ENCODE measurements at regions of chr5 and their contacts with region 1.

Region 1: DNA sequence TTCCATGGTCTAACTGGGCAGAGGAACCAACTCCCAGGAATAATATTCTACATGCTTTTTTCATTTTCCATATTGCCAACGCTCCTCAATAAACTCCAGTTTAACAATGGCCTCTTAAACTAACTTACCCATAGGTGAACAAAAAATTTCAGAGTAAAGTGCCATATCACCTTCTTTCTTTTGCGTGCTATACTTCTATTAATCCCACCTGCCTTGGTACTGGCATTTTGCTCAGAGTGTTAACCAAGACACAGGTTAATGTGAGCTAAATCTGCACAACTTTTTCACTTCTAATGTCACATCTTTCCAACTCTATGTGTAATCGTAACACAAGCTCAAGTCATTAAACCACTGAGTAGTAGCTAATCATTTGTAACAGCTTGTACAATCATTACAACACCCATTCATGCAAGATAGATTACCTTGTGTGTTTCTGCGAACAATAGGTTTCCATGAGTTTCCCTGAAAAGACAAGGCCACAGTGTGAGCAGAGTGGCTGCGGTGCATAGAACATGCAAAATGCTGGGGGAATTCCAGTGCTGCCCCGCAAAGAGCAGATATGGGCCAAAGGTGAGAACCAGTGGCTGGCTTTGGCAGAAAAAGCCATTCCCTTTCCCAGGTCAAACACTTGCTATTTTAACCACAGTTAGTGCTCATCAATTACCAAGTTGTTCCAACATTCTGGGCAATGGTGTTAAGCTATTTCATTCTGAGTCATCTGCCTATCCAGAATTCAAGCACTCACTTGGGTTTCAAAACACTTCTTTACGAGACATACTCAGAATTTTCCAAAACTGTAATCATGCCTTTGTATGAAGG is 42.8 kb downstream of the TIMD4 start:
- DNase-seq: peak; percentile 84
- ATAC-seq: peak; percentile 75
- H3K4me3 Mint-ChIP-seq: peak overlapping the region; percentile 58
- H3K27ac Mint-ChIP-seq: peak overlapping the region; percentile 97
- H3K4me1 Mint-ChIP-seq: peaks cover 52% of the 10 kb centered on the region
- H3K27me3 Mint-ChIP-seq: no peaks in the 10 kb centered on the region

Region 2: DNA sequence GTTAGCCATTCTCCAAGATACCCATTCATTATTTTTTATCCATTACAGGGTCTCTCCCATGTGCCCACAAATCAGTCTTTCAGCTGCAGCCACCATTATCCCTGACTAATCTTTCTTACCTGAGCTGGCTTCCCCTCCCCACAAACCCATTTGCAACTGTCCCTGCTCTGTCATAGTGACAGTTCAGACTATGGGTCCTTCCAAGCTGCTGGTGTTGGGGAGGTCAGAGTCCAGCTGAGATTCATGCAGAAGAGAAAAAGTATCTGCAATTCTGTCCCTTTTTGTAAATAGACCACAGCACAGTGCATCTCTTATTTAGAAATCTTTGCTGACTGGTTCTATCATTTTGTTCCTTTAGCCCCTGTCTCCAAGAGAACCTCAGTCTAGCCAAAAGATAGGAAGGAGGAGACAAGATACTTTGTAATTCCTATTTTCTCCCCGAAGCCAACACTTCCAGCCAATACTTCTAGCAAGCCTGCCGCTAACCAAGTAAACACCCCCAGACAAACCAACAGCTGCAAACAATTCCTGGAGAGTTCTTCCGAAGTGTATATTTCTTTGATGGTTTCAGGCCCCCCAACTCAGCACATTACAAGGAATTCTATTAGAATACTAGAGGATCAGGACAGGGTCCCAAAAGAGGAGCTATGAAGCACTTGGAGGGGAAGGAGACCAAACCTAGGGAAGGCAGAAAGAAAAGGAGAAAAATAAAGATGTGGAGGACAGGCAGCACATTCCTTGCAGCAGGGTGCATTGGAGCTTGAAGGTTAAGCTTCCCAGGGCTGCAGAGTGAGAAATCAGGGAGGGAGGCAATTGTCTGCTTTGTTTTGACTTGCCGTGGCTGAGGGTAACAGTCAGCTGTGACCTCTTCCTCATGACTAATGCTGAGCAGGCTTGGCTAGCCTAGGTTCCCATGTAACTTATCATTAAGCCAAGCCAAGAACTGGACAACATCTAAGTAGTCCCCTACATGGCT is 444.8 kb before region 1 on chr5:
- CTCF ChIA-PET with region 1: no interaction called
- POLR2A ChIA-PET with region 1: no interaction called
- intact Hi-C with region 1: loop called in 1 of 2 experiments (anchors 10 kb)
- DNase-seq: no peak
- ATAC-seq: no peak
- H3K4me3 Mint-ChIP-seq: no peak overlapping the region
- H3K27ac Mint-ChIP-seq: no peak overlapping the region
- H3K4me1 Mint-ChIP-seq: peaks cover 5% of the 10 kb centered on the region
- H3K27me3 Mint-ChIP-seq: peaks cover 2% of the 10 kb centered on the region

Region 3: GRCh38 chr5:156812959-156813358 is 107.3 kb before region 1 on chr5:
- CTCF ChIA-PET with region 1: no interaction called
- POLR2A ChIA-PET with region 1: no interaction called
- intact Hi-C with region 1: no loop called
- DNase-seq: no peak
- ATAC-seq: no peak
- H3K4me3 Mint-ChIP-seq: no peak overlapping the region
- H3K27ac Mint-ChIP-seq: no peak overlapping the region
- H3K4me1 Mint-ChIP-seq: no peaks in the 10 kb centered on the region
- H3K27me3 Mint-ChIP-seq: peaks cover 4% of the 10 kb centered on the region

Region 4: GRCh38 chr5:156824800-156825199 is 95.5 kb before region 1 on chr5:
- CTCF ChIA-PET with region 1: no interaction called
- POLR2A ChIA-PET with region 1: no interaction called
- intact Hi-C with region 1: no loop called
- DNase-seq: no peak
- ATAC-seq: no peak
- H3K4me3 Mint-ChIP-seq: no peak overlapping the region
- H3K27ac Mint-ChIP-seq: no peak overlapping the region
- H3K4me1 Mint-ChIP-seq: no peaks in the 10 kb centered on the region
- H3K27me3 Mint-ChIP-seq: peaks cover 5% of the 10 kb centered on the region

Region 5: DNA sequence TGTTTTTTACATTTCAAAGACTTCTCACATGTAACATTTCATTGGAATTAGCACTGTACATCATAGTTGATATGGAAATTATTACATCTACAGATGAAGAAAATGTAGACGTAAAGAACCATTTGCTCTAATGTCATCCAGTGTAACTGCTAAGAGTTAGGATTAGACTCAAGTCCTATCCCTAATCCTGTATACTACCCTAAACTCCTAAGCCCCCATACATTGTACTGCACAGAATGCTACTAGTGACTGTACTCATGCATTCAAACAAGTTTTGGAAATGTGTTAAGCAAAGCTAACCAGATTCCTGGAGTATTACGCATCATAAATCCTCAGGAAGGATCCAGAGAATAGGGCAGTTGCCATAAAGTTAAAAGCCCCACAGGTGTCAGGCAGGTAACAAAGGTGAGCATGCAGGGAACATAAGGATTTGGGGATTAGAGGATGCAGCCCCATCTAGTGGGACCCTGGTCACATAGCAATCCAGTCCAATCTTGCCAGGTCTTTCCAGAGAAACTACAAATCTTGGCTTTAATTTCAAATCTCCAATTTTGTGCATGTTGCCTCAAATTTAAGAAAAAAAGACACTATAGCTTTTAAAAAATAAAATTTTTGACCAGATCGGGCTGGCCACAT is 106.7 kb after region 1 on chr5:
- CTCF ChIA-PET with region 1: no interaction called
- POLR2A ChIA-PET with region 1: no interaction called
- intact Hi-C with region 1: loop called (anchors 1 kb)
- DNase-seq: peak; percentile 32
- ATAC-seq: no peak
- H3K4me3 Mint-ChIP-seq: no peak overlapping the region
- H3K27ac Mint-ChIP-seq: no peak overlapping the region
- H3K4me1 Mint-ChIP-seq: peaks cover 36% of the 10 kb centered on the region
- H3K27me3 Mint-ChIP-seq: no peaks in the 10 kb centered on the region

Region 6: DNA sequence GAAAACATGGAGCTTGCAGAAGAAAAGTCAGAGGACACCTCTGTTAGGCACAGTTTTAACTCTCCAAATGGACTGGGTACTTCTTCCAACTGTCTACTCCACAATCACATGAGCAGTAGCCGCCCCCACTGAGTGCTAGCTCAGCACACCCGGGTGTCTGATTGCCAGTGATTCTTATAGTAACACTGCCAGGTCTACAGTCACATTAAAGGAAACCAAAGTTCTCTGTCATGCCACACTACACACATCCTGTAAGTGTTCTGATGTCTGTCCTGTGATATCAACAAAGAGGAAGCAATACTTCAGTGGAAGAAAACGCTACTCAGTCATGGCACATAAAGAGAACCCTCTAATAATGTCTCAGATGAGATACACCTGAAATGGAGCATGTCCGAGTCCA is 188.7 kb after region 1 on chr5 and contains the start of gene HAVCR2:
- CTCF ChIA-PET with region 1: no interaction called
- POLR2A ChIA-PET with region 1: no interaction called
- intact Hi-C with region 1: loop called in 1 of 2 experiments (anchors 2 kb)
- DNase-seq: peak; percentile 82
- ATAC-seq: peak; percentile 96
- H3K4me3 Mint-ChIP-seq: peak within 1 kb of the TSS; percentile 65
- H3K27ac Mint-ChIP-seq: peak within 1 kb of the TSS; percentile 97
- H3K4me1 Mint-ChIP-seq: peaks cover 45% of the 10 kb centered on the region
- H3K27me3 Mint-ChIP-seq: no peaks in the 10 kb centered on the region
- total RNA-seq, gene HAVCR2: 12.6 to 15.9 TPM

Region 7: GRCh38 chr5:157142317-157143126 is 222.3 kb after region 1 on chr5 and contains the start of gene MED7:
- CTCF ChIA-PET with region 1: interaction called, 8 read pairs
- POLR2A ChIA-PET with region 1: interaction called, 10 read pairs
- intact Hi-C with region 1: loop called in 1 of 2 experiments (anchors 5 kb)
- DNase-seq: peak; percentile 95
- ATAC-seq: peak; percentile 98
- H3K4me3 Mint-ChIP-seq: peak within 1 kb of the TSS; percentile 84
- H3K27ac Mint-ChIP-seq: peak within 1 kb of the TSS; percentile 99
- H3K4me1 Mint-ChIP-seq: peaks cover 46% of the 10 kb centered on the region
- H3K27me3 Mint-ChIP-seq: no peaks in the 10 kb centered on the region
- total RNA-seq, gene MED7: 10.0 to 16.9 TPM

Region 8: DNA sequence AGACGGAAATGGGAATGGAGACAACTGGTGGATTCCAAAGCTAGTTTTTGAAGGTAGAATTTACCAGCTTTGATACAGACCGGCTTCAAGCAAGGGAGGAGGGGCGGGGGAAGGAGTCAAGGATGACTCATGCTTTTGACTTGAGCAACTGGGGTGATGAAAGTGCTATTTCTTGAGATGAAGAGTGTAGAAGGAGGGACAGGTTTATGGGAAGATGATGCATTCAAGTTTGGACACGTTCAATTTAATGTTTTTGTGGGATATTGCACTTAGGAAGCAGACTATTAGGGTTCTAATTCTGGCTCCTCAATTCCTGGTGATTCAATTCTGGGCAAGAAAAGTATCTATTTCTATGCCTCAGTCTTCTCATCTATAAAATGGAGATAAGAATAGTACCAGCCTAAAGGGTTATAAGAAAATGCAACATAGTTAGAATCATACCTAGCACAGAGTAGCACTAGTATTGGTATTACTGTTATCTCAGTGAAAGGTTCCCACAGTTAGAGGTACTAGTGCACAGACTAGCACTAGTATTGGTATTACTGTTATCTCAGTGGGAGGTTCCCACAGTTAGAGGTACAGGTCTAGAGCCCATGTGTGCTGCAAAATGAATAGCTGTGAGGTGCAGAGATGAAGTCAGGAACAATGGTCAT is 544.4 kb after region 1 on chr5:
- CTCF ChIA-PET with region 1: no interaction called
- POLR2A ChIA-PET with region 1: no interaction called
- intact Hi-C with region 1: loop called in 1 of 2 experiments (anchors 2 kb)
- DNase-seq: peak; percentile 87
- ATAC-seq: peak; percentile 92
- H3K4me3 Mint-ChIP-seq: peak overlapping the region; percentile 34
- H3K27ac Mint-ChIP-seq: peak overlapping the region; percentile 84
- H3K4me1 Mint-ChIP-seq: peaks cover 36% of the 10 kb centered on the region
- H3K27me3 Mint-ChIP-seq: peaks cover 18% of the 10 kb centered on the region

Region 9: DNA sequence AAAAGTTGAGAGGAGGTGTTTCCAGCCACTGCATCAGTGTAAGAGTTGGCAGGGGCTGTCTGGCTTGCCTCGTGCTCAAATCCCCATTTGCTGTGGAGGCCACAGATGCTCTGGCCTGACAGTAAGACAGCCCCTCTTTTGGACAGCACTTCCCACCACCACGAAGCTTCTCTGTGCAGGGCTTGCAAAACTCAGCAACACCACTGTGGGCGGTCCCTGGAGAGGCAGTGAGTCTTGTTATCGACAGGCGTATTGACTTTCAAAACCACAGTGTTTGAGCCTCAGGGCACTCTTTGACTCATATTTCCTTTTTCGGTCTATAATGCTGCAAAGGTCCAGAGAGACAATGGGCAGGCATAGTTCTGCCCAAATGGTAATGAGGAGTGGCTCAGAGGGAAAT is 1639.9 kb after region 1 on chr5:
- CTCF ChIA-PET with region 1: no interaction called
- POLR2A ChIA-PET with region 1: no interaction called
- intact Hi-C with region 1: no loop called
- DNase-seq: no peak
- ATAC-seq: no peak
- H3K4me3 Mint-ChIP-seq: no peak overlapping the region
- H3K27ac Mint-ChIP-seq: no peak overlapping the region
- H3K4me1 Mint-ChIP-seq: no peaks in the 10 kb centered on the region
- H3K27me3 Mint-ChIP-seq: peaks cover 2% of the 10 kb centered on the region